ENCODE measurements at regions of chr22 and their contacts with region 1.

Region 1: DNA sequence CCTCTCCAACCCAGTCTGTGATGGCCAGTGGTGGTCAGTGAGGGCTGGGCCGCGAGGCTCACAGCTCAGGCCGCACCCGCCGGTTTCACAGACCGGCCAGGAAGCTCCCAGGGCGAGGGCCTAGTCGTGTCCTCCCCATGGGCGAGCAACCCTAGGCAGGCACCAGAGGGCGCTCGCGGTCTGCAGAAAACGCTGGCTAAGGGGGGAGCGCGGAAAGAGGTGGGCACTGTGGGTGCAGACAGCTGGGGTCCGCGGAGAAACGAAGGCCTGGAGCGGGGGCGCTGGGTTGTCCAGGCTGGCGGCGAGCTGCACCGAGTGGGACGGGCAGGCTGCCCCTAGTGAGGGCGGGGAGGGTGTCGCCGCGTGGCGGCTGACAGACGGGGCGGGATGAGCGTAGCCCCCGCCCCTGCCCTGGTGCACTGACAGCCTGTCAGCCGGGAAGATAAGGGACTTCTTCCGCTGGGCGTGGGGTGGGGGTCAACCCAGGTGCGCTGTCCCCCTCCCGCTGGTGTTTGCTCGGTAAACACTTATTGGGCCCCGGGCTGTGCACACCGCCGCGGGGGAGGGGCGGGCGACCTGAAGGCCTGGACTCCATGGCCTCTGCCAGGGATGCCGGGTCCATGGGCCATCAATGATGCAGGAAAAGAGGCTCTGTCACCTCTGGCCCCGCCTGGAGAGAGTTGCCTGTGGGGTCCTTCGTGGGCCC is 7.5 kb downstream of the GP1BB start:
- DNase-seq: peak; percentile 87
- H3K4me3 Mint-ChIP-seq: peak overlapping the region; percentile 74
- H3K27ac Mint-ChIP-seq: no peak overlapping the region
- H3K4me1 Mint-ChIP-seq: no peaks in the 10 kb centered on the region
- H3K27me3 Mint-ChIP-seq: no peaks in the 10 kb centered on the region

Region 2: DNA sequence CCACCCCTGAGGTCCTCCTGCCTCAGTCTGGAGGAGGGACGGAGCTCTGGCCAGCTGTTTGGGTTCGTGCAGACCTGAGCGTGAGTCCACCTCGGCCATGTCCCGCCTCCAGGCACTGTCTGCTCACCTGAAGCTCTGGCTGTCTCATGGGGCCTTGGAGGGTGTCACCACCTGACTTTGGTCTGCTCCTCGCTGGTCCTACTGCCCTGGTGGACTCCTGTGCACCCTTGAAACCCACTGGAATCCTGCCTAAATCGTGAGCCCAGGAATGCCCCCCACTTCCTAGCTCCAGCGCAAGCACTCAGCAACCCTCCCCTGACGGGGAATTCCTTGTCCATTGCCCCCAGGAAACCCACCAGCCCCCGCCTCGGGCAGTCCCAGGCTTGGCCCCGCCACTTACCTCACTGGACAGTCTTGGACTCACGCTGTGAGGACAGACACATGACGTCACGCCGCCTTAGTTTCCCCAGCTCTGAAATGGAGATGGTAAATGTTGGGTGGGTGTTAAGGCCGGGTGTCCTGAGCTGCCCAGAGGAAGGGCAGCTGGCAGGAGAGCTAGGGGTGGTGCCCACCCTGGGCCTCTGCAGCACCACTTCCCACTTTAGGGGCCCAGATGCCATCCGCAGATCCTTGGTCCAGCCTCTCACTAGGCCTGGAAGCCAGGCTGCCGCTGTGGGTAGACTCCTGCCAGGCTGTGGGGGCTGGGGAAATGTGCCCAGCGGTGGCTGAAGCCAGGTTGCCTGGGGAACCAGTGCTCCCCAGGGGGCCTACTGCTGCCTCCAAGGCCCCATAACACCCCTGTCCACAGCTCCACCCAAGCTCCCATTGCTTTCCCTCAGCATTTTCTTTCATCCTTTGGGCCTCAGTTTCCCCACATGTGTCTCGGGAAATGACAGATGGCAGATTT is 11.6 kb after region 1 on chr22:
- CTCF ChIA-PET with region 1: interaction called, 11 read pairs
- intact Hi-C with region 1: no loop called
- DNase-seq: no peak
- H3K4me3 Mint-ChIP-seq: no peak overlapping the region
- H3K27ac Mint-ChIP-seq: no peak overlapping the region
- H3K4me1 Mint-ChIP-seq: no peaks in the 10 kb centered on the region
- H3K27me3 Mint-ChIP-seq: no peaks in the 10 kb centered on the region

Region 3: DNA sequence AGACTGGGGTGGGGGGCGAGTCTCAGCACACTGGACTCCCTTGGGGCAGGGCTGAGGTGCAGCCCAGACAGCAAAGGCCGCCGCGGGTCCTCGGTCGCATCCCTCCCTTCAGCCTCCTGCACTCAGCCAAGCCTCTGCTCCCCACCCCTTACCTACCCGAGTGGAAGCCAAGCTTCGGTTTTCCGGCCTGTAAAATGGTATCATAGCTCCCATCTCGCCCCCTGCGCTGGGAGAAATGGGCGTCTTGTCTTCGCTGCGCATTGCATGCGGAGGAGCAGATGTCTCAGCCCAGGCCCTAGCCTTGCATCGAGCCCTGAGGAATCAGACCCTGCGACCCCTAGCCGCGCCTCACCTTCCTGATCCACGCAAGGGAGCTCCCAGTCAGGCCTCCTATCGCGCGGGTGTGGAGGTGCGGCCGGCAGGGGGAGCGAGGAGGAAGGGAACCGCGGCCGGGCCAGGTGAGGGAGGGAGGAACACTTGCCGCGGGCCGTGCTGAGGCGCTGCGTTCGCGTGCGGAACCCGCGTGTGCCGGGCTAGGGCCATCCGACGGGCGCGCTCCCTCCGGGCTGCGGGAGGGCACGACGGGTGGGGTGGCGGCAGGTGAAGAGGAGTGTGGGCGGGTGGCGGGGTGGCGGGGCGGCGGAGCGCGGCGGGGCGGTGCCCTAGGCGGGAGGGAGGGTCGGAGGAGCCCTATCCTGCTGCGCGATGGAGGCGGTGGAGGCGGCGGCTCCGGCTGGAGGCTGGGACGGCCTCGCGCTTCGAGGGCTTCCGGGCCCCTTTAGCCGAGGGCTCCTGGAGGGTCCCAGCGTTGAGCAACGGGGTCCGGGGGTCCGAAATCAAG is 25.7 kb after region 1 on chr22:
- CTCF ChIA-PET with region 1: interaction called, 13 read pairs
- intact Hi-C with region 1: no loop called
- DNase-seq: peak; percentile 83
- H3K4me3 Mint-ChIP-seq: peak overlapping the region; percentile 9
- H3K27ac Mint-ChIP-seq: no peak overlapping the region
- H3K4me1 Mint-ChIP-seq: peaks cover 32% of the 10 kb centered on the region
- H3K27me3 Mint-ChIP-seq: peaks cover 46% of the 10 kb centered on the region

Region 4: DNA sequence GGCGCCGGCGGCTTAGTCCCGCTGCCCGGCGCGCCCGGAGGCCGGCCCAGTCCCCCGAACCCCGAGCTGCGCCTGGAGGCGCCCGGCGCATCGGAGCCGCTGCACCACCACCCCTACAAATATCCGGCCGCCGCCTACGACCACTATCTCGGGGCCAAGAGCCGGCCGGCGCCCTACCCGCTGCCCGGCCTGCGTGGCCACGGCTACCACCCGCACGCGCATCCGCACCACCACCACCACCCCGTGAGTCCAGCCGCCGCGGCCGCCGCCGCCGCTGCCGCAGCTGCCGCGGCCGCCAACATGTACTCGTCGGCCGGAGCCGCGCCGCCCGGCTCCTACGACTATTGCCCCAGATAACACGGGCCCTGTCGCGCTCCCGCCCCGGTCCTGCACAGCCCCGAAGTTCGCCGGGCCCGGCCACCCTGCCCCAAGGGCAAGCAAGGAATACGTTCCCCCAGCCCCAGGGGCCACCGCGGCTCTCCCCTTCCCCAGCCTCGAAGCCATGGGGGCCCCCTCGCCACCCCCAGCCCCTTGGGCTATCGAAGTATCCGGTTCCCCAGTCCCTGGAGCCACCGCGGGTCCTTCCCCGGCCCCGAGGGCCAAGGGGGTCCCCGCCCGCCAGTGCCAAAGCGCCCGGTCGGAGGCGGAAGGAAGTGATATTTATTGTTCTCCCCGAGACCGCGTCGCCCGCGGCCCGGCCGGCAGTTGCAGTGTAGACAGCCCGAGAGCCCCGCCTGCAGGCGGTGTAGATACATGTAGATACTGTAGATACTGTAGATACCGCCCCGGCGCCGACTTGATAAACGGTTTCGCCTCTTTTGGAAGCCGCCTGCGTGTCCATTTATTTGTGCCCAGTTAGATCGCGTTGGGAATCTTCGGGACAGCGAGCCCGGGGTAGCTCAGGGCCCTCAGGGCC is 36.0 kb after region 1 on chr22:
- CTCF ChIA-PET with region 1: interaction called, 5 read pairs
- intact Hi-C with region 1: loop called (anchors 1 kb)
- DNase-seq: peak; percentile 70
- H3K4me3 Mint-ChIP-seq: no peak overlapping the region
- H3K27ac Mint-ChIP-seq: no peak overlapping the region
- H3K4me1 Mint-ChIP-seq: peaks cover 10% of the 10 kb centered on the region
- H3K27me3 Mint-ChIP-seq: peaks cover 65% of the 10 kb centered on the region

Region 5: GRCh38 chr22:19909350-19910179 is 178.8 kb after region 1 on chr22:
- CTCF ChIA-PET with region 1: interaction called, 81 read pairs
- intact Hi-C with region 1: loop called (anchors 1 kb)
- DNase-seq: peak; percentile 93
- H3K4me3 Mint-ChIP-seq: no peak overlapping the region
- H3K27ac Mint-ChIP-seq: peak overlapping the region; percentile 42
- H3K4me1 Mint-ChIP-seq: peaks cover 2% of the 10 kb centered on the region
- H3K27me3 Mint-ChIP-seq: no peaks in the 10 kb centered on the region

Region 6: GRCh38 chr22:20016734-20017621 is 286.2 kb after region 1 on chr22 and contains the start of gene ARVCF:
- CTCF ChIA-PET with region 1: interaction called, 13 read pairs
- intact Hi-C with region 1: no loop called
- DNase-seq: peak; percentile 90
- H3K4me3 Mint-ChIP-seq: peak within 1 kb of the TSS; percentile 84
- H3K27ac Mint-ChIP-seq: no peak within 1 kb of the TSS
- H3K4me1 Mint-ChIP-seq: peaks cover 17% of the 10 kb centered on the region
- H3K27me3 Mint-ChIP-seq: peaks cover 11% of the 10 kb centered on the region
- total RNA-seq, gene ARVCF: 2.0 to 2.6 TPM